Activated B cell treated with CpG ODN at 0.5 μM for 24 hours (primary cell): ENCODE measurements at regions of chr10 and their contacts with region 1.

Region 1: DNA sequence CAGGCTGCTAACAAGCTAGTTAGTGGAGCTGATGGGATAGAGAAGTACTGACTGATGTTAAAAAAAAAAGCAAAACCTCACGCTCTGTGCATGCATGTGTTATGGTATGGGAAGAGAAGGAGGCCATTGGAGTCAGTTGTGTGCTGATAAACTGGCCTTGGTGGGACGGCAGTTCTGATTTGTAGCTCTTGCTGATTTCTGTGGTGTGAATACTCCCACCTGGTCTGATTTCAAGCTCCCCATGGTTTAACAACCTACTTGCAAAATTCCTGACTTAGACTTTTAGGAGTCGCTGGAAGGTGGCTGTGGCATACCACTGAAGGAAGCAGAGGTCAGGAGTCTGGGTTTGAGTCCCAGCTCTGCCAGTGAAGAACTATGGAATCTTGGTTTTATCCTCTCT is 15.2 kb downstream of the CAMK1D start:
- DNase-seq: no peak
- ATAC-seq: no peak
- H3K4me3 Mint-ChIP-seq: no peak overlapping the region
- H3K27ac Mint-ChIP-seq: peak overlapping the region; percentile 35
- H3K4me1 Mint-ChIP-seq: peaks cover 71% of the 10 kb centered on the region
- H3K27me3 Mint-ChIP-seq: no peaks in the 10 kb centered on the region
- CTCF ChIP-seq: no peak

Region 2: GRCh38 chr10:12375076-12375504 is 10.5 kb after region 1 on chr10:
- CTCF ChIA-PET with region 1: interaction called, 3 read pairs
- POLR2A ChIA-PET with region 1: interaction called, 11 read pairs
- intact Hi-C with region 1: no loop called
- DNase-seq: no peak
- ATAC-seq: no peak
- H3K4me3 Mint-ChIP-seq: no peak overlapping the region
- H3K27ac Mint-ChIP-seq: peak overlapping the region; percentile 54
- H3K4me1 Mint-ChIP-seq: peaks cover 36% of the 10 kb centered on the region
- H3K27me3 Mint-ChIP-seq: no peaks in the 10 kb centered on the region
- CTCF ChIP-seq: no peak

Region 3: GRCh38 chr10:12500381-12501303 is 136.1 kb after region 1 on chr10:
- CTCF ChIA-PET with region 1: no interaction called
- POLR2A ChIA-PET with region 1: no interaction called
- intact Hi-C with region 1: no loop called
- DNase-seq: no peak
- ATAC-seq: no peak
- H3K4me3 Mint-ChIP-seq: no peak overlapping the region
- H3K27ac Mint-ChIP-seq: no peak overlapping the region
- H3K4me1 Mint-ChIP-seq: peaks cover 61% of the 10 kb centered on the region
- H3K27me3 Mint-ChIP-seq: no peaks in the 10 kb centered on the region
- CTCF ChIP-seq: no peak